Ovary (tissue), 10 donors: ENCODE measurements at regions of chr22 and their contacts with region 1.

Region 1: GRCh38 chr22:37199103-37199759 is 11.2 kb upstream of the C1QTNF6 start:
- DNase-seq: peak; percentile 99 to 100 (median 100)
- H3K4me3 ChIP-seq: peak overlapping the region; percentile 41
- H3K27ac ChIP-seq: peak overlapping the region; percentile 46 to 89
- H3K4me1 ChIP-seq: peaks cover 16% of the 10 kb centered on the region
- H3K27me3 ChIP-seq: no peaks in the 10 kb centered on the region
- CTCF ChIP-seq: peak; percentile 92 to 99 (median 98)
- EP300 ChIP-seq: no peak
- POLR2A ChIP-seq: peak; percentile 93

Region 2: GRCh38 chr22:36775964-36776669 is 423.1 kb before region 1 on chr22 and contains the start of gene IFT27:
- intact Hi-C with region 1: loop called in 2 of 4 experiments (anchors 5 to 10 kb)
- DNase-seq: peak; percentile 96 to 100 (median 98)
- H3K4me3 ChIP-seq: peak within 1 kb of the TSS; percentile 98
- H3K27ac ChIP-seq: peak within 1 kb of the TSS; percentile 71 to 89
- H3K4me1 ChIP-seq: peaks cover 5% of the 10 kb centered on the region
- H3K27me3 ChIP-seq: no peaks in the 10 kb centered on the region
- CTCF ChIP-seq: no peak
- EP300 ChIP-seq: no peak
- POLR2A ChIP-seq: peak; percentile 26
- total RNA-seq, gene IFT27: 26.0 to 38.8 (median 29.5) TPM

Region 3: GRCh38 chr22:36781656-36782627 is 417.3 kb before region 1 on chr22:
- intact Hi-C with region 1: loop called in 2 of 4 experiments (anchors 5 to 10 kb)
- DNase-seq: peak; percentile 50 to 84 (median 73)
- H3K4me3 ChIP-seq: no peak overlapping the region
- H3K27ac ChIP-seq: no peak overlapping the region
- H3K4me1 ChIP-seq: peaks cover under 1% of the 10 kb centered on the region
- H3K27me3 ChIP-seq: no peaks in the 10 kb centered on the region
- CTCF ChIP-seq: peak; percentile 63 to 78 (median 69)
- EP300 ChIP-seq: no peak
- POLR2A ChIP-seq: no peak

Region 4: GRCh38 chr22:37019309-37020125 is 179.7 kb before region 1 on chr22 and contains the starts of genes MPST and TST:
- intact Hi-C with region 1: loop called in 1 of 4 experiments (anchors 5 kb)
- DNase-seq: peak; percentile 81 to 87 (median 84)
- H3K4me3 ChIP-seq: peak within 1 kb of the TSS; percentile 87
- H3K27ac ChIP-seq: peak within 1 kb of the TSS; percentile 83
- H3K4me1 ChIP-seq: peaks cover 26% of the 10 kb centered on the region
- H3K27me3 ChIP-seq: no peaks in the 10 kb centered on the region
- CTCF ChIP-seq: peak in 2 of 3 donors; percentile 82 to 93
- EP300 ChIP-seq: no peak
- POLR2A ChIP-seq: peak; percentile 73
- total RNA-seq, gene MPST: 67.7 to 178 (median 91.6) TPM
- total RNA-seq, gene TST: 25.9 to 59.9 (median 42.4) TPM

Region 5: DNA sequence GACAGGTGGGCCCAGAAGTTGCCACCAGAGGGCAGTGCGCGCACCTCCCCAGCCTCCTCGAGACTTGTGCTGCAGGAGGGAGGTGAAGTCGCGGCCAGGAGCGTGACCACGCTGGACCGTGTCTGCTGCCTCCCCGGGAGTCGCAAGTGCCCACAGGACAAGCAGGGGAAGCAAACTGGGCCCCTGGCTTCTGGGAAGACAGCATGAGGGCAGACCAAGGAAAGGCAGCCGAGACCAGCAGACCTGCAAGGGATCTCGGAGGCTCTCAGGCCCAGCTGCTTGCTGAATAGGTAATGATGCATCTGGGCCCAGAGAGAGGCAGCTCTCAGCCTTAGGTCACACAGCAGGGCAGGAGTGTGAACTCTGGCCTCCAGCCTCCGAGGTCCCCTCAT is 32.6 kb before region 1 on chr22:
- intact Hi-C with region 1: loop called in 3 of 4 experiments (anchors 2 kb)
- DNase-seq: peak; percentile 76 to 88 (median 86)
- H3K4me3 ChIP-seq: no peak overlapping the region
- H3K27ac ChIP-seq: no peak overlapping the region
- H3K4me1 ChIP-seq: no peaks in the 10 kb centered on the region
- H3K27me3 ChIP-seq: no peaks in the 10 kb centered on the region
- CTCF ChIP-seq: peak; percentile 70 to 90 (median 89)
- EP300 ChIP-seq: no peak
- POLR2A ChIP-seq: peak; percentile 8

Region 6: GRCh38 chr22:37282385-37282677 is 83.1 kb after region 1 on chr22 and contains the start of gene CYTH4:
- intact Hi-C with region 1: no loop called
- DNase-seq: no peak
- H3K4me3 ChIP-seq: no peak within 1 kb of the TSS
- H3K27ac ChIP-seq: no peak within 1 kb of the TSS
- H3K4me1 ChIP-seq: no peaks in the 10 kb centered on the region
- H3K27me3 ChIP-seq: no peaks in the 10 kb centered on the region
- CTCF ChIP-seq: no peak
- EP300 ChIP-seq: no peak
- POLR2A ChIP-seq: no peak
- total RNA-seq, gene CYTH4: 2.4 to 14.5 (median 6.2) TPM

Region 7: GRCh38 chr22:37745548-37746365 is 546.5 kb after region 1 on chr22:
- intact Hi-C with region 1: no loop called
- DNase-seq: peak; percentile 91 to 93 (median 92)
- H3K4me3 ChIP-seq: peak overlapping the region; percentile 84
- H3K27ac ChIP-seq: peak overlapping the region; percentile 87 to 93
- H3K4me1 ChIP-seq: peaks cover 32% of the 10 kb centered on the region
- H3K27me3 ChIP-seq: no peaks in the 10 kb centered on the region
- CTCF ChIP-seq: no peak
- EP300 ChIP-seq: no peak
- POLR2A ChIP-seq: no peak